ENCODE measurements at regions of chr2 and their contacts with region 1.

Region 1: DNA sequence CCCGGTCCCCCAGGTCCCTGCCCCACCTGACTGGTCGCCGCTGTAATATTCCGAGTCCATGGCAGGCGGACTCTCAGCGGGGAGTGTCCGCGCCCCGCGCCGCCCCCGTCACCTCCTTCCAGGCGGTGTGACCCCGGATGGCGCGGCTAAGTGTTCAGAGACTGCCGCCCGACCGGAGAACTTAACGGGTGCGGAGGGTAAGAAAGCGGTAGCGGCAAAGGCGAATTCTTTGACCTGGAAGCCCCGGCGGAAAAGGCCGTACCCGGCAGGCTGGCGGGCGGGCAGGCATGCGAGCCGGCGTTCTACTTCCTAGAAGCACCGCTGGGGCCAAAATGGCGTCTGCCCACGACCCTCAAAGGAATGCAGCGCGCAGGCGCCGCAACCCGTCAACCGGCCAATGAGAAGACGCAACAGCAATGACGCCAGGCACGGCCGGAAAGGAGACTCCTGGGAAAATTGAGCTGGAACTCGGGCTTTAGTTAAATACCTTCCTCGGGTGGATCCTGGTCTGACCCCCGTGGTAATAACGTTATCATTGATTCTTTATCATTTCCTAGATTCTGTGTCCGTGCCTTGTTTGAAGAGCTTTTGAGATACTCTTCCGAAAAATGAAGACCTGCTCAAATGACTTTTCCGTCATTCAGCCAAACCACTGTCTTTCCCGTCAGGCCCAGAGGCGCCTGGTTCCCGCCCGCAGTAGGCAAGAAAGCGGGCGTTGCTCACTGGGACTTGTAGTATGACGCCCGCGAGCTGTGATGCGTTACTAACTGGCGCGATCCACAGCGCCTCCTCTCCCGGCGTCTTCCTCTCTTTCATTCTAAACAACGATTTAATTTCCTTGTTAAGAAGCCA is at the start of gene IWS1:
- DNase-seq: peak; percentile 82 to 98 (median 90)
- ATAC-seq: peak; percentile 87
- H3K4me3 ChIP-seq: peak within 1 kb of the TSS; percentile 69 to 75
- H3K4me3 Mint-ChIP-seq: peak within 1 kb of the TSS; percentile 98
- H3K27ac ChIP-seq: peak within 1 kb of the TSS; percentile 91 to 97
- H3K27ac Mint-ChIP-seq: peak within 1 kb of the TSS; percentile 99
- H3K4me1 ChIP-seq: peaks cover 31% of the 10 kb centered on the region
- H3K4me1 Mint-ChIP-seq: peaks cover 37% of the 10 kb centered on the region
- H3K27me3 ChIP-seq: no peaks in the 10 kb centered on the region
- H3K27me3 Mint-ChIP-seq: no peaks in the 10 kb centered on the region
- CTCF ChIP-seq: no peak
- total RNA-seq, gene IWS1: 30.4 to 33.4 TPM

Region 2: DNA sequence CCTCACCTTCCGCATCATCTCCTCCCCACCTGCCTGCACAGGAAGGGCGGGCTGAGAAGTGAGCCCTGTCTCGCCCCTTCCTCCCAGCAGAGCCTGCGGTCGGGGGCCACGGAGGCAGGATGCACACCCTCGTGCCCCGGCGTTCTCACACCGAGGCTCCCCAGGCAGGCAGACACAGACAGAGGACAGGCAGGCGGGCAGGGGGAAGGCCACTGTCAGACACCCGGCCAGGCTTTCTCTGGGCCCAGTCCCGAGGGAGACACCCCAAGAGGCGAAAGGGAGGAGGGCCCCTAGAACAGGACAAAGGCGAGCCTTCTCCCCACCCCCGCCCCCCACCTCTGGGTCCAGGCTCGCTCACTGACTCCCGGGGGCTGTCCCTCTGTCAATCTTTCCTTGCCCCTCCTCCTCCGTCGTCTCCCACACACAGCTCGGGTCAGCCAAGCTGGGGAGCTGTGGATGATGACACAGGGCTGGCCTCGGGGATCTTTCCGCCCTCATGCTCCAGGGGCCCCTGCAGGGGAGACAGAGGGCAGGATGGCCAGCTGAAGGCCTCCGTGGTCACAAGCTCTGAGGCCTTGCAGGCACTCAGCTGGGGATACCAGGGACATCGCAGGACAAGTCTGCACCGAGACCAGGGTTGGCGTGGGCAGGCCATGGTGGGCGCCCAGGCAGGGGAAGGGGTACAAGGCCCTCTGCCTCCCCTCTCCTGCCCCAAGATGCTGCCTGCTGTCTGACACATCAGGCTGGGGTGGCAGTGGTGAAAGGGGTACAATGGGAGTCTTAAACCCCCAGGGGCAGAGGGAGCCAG is 444.3 kb before region 1 on chr2:
- CTCF ChIA-PET with region 1: no interaction called
- POLR2A ChIA-PET with region 1: no interaction called
- intact Hi-C with region 1: loop called (anchors 2 to 5 kb)
- DNase-seq: peak; percentile 67 to 94 (median 82)
- ATAC-seq: peak; percentile 66
- H3K4me3 ChIP-seq: peak overlapping the region; percentile 84 to 94
- H3K4me3 Mint-ChIP-seq: peak overlapping the region; percentile 90
- H3K27ac ChIP-seq: peak overlapping the region; percentile 94 to 96
- H3K27ac Mint-ChIP-seq: peak overlapping the region; percentile 99
- H3K4me1 ChIP-seq: peaks cover 94% of the 10 kb centered on the region
- H3K4me1 Mint-ChIP-seq: peaks cover 85% of the 10 kb centered on the region
- H3K27me3 ChIP-seq: no peaks in the 10 kb centered on the region
- H3K27me3 Mint-ChIP-seq: no peaks in the 10 kb centered on the region
- CTCF ChIP-seq: no peak

Region 3: DNA sequence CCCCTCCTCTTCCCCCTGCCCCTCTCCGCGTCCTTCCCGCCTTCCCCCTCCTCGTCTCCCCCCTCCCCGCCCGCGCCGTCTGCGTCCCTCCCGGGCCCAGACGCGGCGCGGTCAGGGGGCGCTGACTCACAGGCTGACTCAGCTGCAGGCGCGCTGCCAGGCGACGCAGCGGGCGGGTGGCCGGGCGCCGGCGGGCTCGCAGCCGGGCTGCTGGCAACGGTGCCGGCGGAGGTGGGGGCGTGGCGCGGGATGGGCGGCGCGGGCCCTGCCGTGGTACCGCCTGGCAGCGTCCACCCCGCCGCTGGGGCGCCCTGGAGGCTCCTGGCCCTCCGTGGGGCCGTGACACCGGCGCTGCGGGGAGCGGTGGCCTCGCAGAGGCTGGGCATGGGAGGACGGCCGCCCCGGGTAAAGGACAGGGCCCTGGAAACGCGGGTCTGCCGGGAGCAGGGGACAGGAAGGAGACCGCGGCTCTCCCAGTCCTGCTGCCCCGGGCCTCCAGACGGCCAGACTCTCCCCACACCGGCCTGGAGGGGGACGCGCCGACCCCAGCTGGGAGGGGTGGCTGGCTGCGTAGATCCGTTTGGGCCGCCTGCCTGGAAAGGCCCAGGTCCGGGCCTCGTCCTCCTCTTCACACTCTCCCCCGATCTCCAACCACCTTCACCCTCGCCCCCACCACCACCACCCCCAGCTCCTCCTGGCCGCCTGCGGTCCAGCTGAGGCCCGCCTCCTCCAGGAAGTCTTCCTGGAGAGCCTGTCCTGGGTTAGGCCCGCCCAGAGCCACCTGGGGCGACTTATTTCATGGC is 118.2 kb before region 1 on chr2:
- CTCF ChIA-PET with region 1: no interaction called
- POLR2A ChIA-PET with region 1: no interaction called
- intact Hi-C with region 1: loop called in 1 of 2 experiments (anchors 5 kb)
- DNase-seq: peak; percentile 73 to 95 (median 90)
- ATAC-seq: peak; percentile 88
- H3K4me3 ChIP-seq: peak overlapping the region; percentile 16 to 44
- H3K4me3 Mint-ChIP-seq: peak overlapping the region; percentile 65
- H3K27ac ChIP-seq: peak overlapping the region in 1 of 2 experiments; percentile 37
- H3K27ac Mint-ChIP-seq: no peak overlapping the region
- H3K4me1 ChIP-seq: peaks cover 5% of the 10 kb centered on the region
- H3K4me1 Mint-ChIP-seq: peaks cover 12% of the 10 kb centered on the region
- H3K27me3 ChIP-seq: no peaks in the 10 kb centered on the region
- H3K27me3 Mint-ChIP-seq: no peaks in the 10 kb centered on the region
- CTCF ChIP-seq: no peak

Region 4: DNA sequence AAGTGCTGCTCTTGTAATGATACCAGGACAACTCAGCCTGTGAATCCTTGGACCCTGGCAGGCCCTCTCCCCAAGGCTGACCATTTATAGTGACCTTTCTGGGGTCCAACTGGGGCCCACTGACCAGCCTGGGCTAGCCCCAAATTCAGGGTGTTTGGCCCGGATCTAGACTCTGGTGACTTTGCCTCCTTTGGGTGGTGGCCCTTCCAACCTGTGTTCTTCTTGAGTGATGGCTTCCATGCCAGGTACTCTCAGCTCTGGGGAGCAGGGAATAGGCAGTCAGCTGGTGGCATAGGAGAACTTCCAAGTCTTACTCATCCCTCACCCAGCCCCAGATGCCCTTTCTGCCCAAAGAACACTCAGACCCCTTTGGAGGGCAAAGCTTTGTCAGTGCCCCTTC is 19.4 kb after region 1 on chr2:
- CTCF ChIA-PET with region 1: no interaction called
- POLR2A ChIA-PET with region 1: no interaction called
- intact Hi-C with region 1: no loop called
- DNase-seq: no peak
- ATAC-seq: no peak
- H3K4me3 ChIP-seq: no peak overlapping the region
- H3K4me3 Mint-ChIP-seq: no peak overlapping the region
- H3K27ac ChIP-seq: no peak overlapping the region
- H3K27ac Mint-ChIP-seq: no peak overlapping the region
- H3K4me1 ChIP-seq: no peaks in the 10 kb centered on the region
- H3K4me1 Mint-ChIP-seq: no peaks in the 10 kb centered on the region
- H3K27me3 ChIP-seq: peaks cover 0 to 6% of the 10 kb centered on the region in 2 experiments
- H3K27me3 Mint-ChIP-seq: peaks cover 23% of the 10 kb centered on the region
- CTCF ChIP-seq: no peak

Region 5: DNA sequence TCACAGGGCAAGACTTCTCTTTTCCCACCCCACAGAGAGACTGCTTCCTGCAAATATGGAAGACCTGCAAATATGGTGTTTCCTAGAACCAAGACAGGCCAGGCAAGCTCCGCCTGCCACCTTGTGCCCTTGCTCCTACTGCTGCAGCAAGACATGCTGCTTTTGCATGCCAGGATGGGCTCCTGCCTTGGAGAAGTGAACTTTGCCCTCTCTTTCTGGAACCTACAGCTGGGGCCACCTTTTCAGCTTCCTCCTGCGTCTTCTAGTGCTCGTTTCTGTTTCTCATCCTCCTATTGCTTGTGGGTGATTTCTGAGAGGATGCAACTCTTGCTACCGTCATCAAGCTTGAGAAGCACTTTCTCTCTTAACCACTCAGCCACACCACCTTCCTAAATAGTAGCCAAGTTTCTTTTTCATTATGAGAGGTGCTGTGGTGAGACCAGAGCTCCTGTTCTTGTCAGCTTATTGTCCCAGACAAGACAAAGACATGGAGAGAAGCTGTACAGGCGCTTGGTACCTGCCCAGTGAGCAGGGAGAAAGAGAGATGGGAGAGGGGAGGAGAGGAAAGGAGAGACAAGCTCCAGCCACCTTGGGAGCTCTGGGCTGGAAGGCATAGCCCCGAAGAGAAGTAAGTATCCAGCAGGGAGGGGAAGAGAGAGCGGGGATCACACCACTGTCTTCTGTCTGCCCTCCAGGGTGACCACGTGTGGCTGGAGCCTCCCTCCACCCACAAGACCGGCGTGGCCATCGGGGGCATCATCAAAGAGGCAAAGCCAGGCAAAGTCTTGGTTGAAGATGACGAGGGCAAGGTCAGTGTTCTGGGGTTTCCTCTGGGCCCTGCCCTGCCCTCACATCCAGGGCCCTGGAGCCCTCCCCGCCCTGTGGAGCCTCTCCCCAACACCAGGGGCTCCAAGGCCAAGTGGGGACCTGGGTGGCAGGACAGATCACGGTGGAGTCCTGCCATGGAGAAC is 37.4 kb after region 1 on chr2:
- CTCF ChIA-PET with region 1: no interaction called
- POLR2A ChIA-PET with region 1: no interaction called
- intact Hi-C with region 1: no loop called
- DNase-seq: peak in 1 of 9 experiments; percentile 15
- ATAC-seq: no peak
- H3K4me3 ChIP-seq: no peak overlapping the region
- H3K4me3 Mint-ChIP-seq: no peak overlapping the region
- H3K27ac ChIP-seq: no peak overlapping the region
- H3K27ac Mint-ChIP-seq: no peak overlapping the region
- H3K4me1 ChIP-seq: no peaks in the 10 kb centered on the region
- H3K4me1 Mint-ChIP-seq: no peaks in the 10 kb centered on the region
- H3K27me3 ChIP-seq: no peaks in the 10 kb centered on the region
- H3K27me3 Mint-ChIP-seq: peaks cover 2% of the 10 kb centered on the region
- CTCF ChIP-seq: no peak

Region 6: DNA sequence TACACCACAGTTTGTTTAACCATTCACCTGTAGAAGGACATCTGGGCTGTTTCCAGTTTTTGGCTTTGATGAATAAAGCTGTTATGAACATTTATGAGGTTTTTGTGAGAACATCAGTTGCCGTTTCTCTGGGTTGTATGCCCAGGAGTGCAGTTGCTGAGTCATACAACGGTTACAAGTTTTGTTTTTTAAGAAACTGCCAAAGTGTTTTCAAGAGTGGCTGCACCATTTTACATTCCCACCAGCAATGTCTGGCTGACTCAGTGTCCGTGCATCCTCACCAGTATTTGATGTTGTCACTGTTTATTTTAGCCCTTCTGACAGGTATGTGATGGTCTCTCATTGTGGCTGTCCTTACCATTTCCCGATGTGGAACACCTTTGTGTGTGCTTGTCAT is 71.6 kb after region 1 on chr2:
- CTCF ChIA-PET with region 1: no interaction called
- POLR2A ChIA-PET with region 1: no interaction called
- intact Hi-C with region 1: no loop called
- DNase-seq: no peak
- ATAC-seq: no peak
- H3K4me3 ChIP-seq: no peak overlapping the region
- H3K4me3 Mint-ChIP-seq: no peak overlapping the region
- H3K27ac ChIP-seq: no peak overlapping the region
- H3K27ac Mint-ChIP-seq: no peak overlapping the region
- H3K4me1 ChIP-seq: no peaks in the 10 kb centered on the region
- H3K4me1 Mint-ChIP-seq: no peaks in the 10 kb centered on the region
- H3K27me3 ChIP-seq: no peaks in the 10 kb centered on the region
- H3K27me3 Mint-ChIP-seq: no peaks in the 10 kb centered on the region
- CTCF ChIP-seq: no peak

Region 7: DNA sequence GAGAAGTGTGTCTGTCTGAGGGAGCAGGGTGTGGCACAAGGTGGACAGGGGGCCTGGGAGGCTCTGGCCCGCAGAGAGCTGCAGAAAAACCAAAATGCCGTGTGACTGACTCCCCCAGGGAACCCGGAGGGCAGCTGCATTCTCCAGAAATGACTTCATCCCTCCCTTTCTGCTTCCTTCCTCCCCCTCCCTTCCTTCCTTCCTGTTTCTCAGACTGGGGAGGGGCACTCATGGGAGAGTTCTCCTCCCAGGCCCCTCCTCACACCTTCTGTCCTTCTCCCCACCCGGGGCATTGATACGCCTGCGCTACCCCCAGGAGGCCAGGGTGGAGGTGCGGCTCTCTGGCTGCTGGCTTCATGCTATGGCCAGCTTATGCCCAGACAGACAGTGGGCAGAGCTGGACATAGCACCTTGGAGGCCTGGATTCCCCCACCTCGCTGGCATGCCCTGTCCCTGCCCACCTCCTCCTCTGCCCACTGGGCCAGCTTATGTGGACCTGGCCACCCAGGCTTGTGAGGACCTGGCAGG is 111.4 kb after region 1 on chr2:
- CTCF ChIA-PET with region 1: no interaction called
- POLR2A ChIA-PET with region 1: no interaction called
- intact Hi-C with region 1: loop called in 1 of 2 experiments (anchors 5 kb)
- DNase-seq: no peak
- ATAC-seq: no peak
- H3K4me3 ChIP-seq: peak overlapping the region in 1 of 2 experiments; percentile 15
- H3K4me3 Mint-ChIP-seq: peak overlapping the region; percentile 43
- H3K27ac ChIP-seq: no peak overlapping the region
- H3K27ac Mint-ChIP-seq: peak overlapping the region; percentile 89
- H3K4me1 ChIP-seq: peaks cover 94% of the 10 kb centered on the region
- H3K4me1 Mint-ChIP-seq: peaks cover 71% of the 10 kb centered on the region
- H3K27me3 ChIP-seq: no peaks in the 10 kb centered on the region
- H3K27me3 Mint-ChIP-seq: no peaks in the 10 kb centered on the region
- CTCF ChIP-seq: no peak

Region 8: DNA sequence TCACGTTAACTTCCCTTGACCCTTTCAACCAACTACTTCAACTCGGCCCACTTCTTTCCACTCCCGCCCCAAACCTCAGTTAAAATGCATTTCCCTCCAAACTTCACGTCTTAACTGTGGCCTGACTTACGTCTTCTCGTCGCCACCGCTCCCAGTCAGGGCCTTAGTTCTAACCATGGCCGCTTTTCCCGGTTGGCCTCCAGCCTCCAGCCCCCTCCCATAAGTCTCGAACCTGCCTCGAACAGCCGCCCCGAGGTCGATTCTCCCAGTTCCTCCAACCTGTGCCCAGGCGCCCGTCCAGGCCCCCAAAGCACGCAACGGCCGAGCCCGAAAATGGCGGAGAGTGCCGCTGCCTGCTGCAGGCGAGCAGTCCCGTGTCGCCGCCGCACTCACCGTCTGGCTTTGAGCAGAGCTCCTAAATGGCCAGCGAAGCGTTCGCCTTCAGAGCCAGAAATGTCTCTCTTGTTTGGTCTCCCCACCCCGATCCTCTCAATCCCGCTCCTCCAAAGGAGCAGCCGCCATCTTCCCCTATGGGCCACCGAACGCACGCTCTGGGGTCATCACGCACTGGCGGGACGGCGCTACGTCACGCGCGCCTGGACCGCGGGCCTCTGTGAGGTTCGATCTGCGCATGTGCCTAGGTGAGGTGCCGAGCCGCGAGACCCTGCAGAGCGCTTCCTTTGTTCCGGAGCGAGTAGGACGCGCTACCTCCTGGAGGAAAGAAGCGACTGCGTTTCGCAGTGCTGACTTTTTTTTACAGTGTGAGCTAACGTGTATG is 284.4 kb after region 1 on chr2 and contains the start of gene WDR33:
- CTCF ChIA-PET with region 1: no interaction called
- POLR2A ChIA-PET with region 1: no interaction called
- intact Hi-C with region 1: loop called in 1 of 2 experiments (anchors 2 kb)
- DNase-seq: peak; percentile 87 to 98 (median 95)
- ATAC-seq: peak; percentile 95
- H3K4me3 ChIP-seq: peak within 1 kb of the TSS; percentile 88 to 92
- H3K4me3 Mint-ChIP-seq: peak within 1 kb of the TSS; percentile 92
- H3K27ac ChIP-seq: peak within 1 kb of the TSS; percentile 95 to 98
- H3K27ac Mint-ChIP-seq: peak within 1 kb of the TSS; percentile 98
- H3K4me1 ChIP-seq: peaks cover 42% of the 10 kb centered on the region
- H3K4me1 Mint-ChIP-seq: peaks cover 51% of the 10 kb centered on the region
- H3K27me3 ChIP-seq: no peaks in the 10 kb centered on the region
- H3K27me3 Mint-ChIP-seq: no peaks in the 10 kb centered on the region
- CTCF ChIP-seq: no peak
- total RNA-seq, gene WDR33: 60.3 to 61.0 TPM

Region 9: DNA sequence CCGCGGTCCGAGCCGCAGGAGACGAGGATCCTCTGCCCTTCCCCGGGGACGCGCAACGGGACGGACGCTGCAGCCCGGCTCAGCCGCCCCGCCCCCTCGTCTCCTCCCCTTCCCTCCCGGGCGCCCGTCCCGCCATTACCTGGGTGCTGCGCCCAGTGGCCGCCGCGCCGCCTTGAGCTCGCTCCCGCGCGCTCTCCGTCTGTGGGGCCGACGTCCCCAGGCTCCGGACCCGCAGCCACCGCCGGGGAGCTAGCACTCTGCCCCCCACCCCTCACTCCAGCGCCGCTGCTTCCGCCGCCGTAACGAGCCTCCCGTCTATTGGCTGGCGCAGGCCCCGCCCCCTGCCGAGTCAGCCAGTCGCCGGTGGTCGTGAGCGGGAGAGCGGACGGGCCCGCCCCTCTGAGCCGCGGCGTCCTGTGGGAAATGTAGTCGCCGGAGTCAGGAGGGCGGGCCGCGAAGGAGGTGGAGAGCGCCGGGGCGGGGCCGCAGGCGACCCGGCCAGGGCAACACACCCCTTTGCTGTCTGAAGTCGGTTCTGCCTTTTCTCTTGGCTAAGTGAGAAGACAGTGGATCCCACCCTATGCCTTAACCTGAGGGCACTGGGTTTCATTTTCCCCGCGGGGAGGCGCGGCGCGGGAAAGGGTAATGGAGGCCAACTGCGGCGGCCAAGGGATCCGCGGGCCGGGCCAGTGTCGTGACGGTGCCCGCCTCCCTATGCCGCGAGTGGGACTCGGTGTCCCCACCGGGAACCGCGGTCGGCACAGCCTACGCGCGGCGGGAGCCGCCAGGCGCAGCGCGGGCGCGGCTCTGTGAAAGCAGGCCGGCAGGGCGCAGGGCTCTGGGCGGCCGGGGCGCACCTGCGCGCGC is 501.7 kb after region 1 on chr2 and contains the start of gene SAP130:
- CTCF ChIA-PET with region 1: no interaction called
- POLR2A ChIA-PET with region 1: no interaction called
- intact Hi-C with region 1: loop called (anchors 1 to 2 kb)
- DNase-seq: peak; percentile 95 to 99 (median 98)
- ATAC-seq: peak; percentile 75
- H3K4me3 ChIP-seq: peak within 1 kb of the TSS; percentile 82 to 89
- H3K4me3 Mint-ChIP-seq: peak within 1 kb of the TSS; percentile 97
- H3K27ac ChIP-seq: peak within 1 kb of the TSS; percentile 79 to 85
- H3K27ac Mint-ChIP-seq: peak within 1 kb of the TSS; percentile 92
- H3K4me1 ChIP-seq: peaks cover 12% of the 10 kb centered on the region
- H3K4me1 Mint-ChIP-seq: peaks cover 23% of the 10 kb centered on the region
- H3K27me3 ChIP-seq: no peaks in the 10 kb centered on the region
- H3K27me3 Mint-ChIP-seq: no peaks in the 10 kb centered on the region
- CTCF ChIP-seq: no peak
- total RNA-seq, gene SAP130: 17.8 to 18.9 TPM

Region 10: GRCh38 chr2:128970332-128971116 is 1444.1 kb after region 1 on chr2:
- CTCF ChIA-PET with region 1: no interaction called
- POLR2A ChIA-PET with region 1: no interaction called
- intact Hi-C with region 1: no loop called
- DNase-seq: no peak
- ATAC-seq: no peak
- H3K4me3 ChIP-seq: no peak overlapping the region
- H3K4me3 Mint-ChIP-seq: no peak overlapping the region
- H3K27ac ChIP-seq: no peak overlapping the region
- H3K27ac Mint-ChIP-seq: no peak overlapping the region
- H3K4me1 ChIP-seq: no peaks in the 10 kb centered on the region
- H3K4me1 Mint-ChIP-seq: peaks cover 6% of the 10 kb centered on the region
- H3K27me3 ChIP-seq: no peaks in the 10 kb centered on the region
- H3K27me3 Mint-ChIP-seq: no peaks in the 10 kb centered on the region
- CTCF ChIP-seq: no peak